HEK293T (cell line): ENCODE measurements at regions of chr13 and their contacts with region 1.

Region 1: DNA sequence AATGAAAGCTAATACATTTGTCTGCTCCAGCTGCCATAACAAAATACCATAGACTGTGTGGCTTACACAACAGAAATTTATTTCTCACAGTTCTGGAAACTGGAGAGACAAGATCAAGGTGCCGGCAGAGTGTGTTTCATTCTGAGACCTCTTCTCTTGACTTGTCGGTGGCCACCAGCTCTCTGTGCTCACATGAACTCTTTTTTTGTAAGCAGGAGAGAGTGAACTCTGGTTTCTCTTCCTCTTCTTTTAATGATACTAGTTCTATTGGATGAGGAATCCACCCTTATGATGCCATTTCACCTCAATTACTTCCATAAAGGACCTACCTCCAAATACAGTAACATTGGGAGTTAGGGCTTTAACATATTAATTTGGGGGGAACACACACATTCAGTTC is 11.7 kb downstream of the KCTD12 start:
- DNase-seq: no peak

Region 2: GRCh38 chr13:76837801-76838200 is 36.7 kb before region 1 on chr13:
- CTCF ChIA-PET with region 1: no interaction called
- POLR2A ChIA-PET with region 1: no interaction called
- DNase-seq: no peak

Region 3: DNA sequence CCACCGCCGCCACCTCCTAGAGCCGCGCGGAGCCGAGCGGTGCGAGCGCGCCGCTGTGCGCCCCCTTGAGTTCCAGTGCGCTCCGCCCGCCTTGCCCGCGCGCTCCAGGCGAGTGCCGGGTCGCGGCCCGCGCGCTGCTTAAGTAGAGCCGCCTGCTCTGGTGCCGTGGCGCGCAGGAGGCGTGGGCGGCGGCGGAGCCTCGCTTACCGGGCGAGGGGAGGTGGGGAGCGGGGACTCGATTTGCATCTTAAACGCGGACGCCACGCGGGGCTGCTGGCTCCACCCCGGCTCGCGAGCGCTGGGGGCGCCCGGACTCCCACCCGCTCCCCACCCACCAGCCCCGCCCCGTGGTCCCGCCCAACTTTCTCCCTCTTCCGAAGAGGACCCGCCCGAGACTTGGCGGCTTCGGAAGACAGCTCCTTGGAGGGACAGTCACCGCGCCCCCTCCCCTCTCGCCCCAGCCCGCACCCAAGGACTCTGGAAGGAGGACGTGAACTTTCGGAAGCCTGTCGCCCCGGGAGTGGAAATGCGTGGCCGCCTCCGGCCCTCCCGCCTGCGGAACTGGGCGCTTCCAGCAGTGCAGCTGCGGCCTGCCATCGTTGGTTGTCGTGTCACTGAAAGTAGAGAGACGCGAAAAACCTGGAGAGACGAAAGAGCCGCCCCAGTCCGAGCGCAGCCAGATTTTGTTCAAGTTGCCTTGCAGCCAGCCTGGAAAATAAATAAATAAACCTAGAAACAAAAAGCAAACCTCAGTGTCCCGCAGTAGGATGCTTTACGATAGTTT is 12.0 kb after region 1 on chr13 and contains the start of gene KCTD12:
- CTCF ChIA-PET with region 1: interaction called, 20 read pairs
- POLR2A ChIA-PET with region 1: interaction called, 20 read pairs
- DNase-seq: peak; percentile 90